ENCODE measurements at regions of chr4 and their contacts with region 1.

Region 1: GRCh38 chr4:127732613-127733328 is 2.6 kb downstream of the SLC25A31 start:
- DNase-seq: peak; percentile 72
- H3K4me3 ChIP-seq: no peak overlapping the region
- H3K27ac ChIP-seq: no peak overlapping the region
- H3K4me1 ChIP-seq: no peaks in the 10 kb centered on the region
- H3K27me3 ChIP-seq: no peaks in the 10 kb centered on the region
- CTCF ChIP-seq: peak; percentile 78
- EP300 ChIP-seq: no peak
- RAD21 ChIP-seq: peak; percentile 80

Region 2: GRCh38 chr4:127598656-127599055 is 134.1 kb before region 1 on chr4:
- CTCF ChIA-PET with region 1: interaction called, 104 read pairs
- POLR2A ChIA-PET with region 1: no interaction called
- DNase-seq: no peak
- H3K4me3 ChIP-seq: no peak overlapping the region
- H3K27ac ChIP-seq: no peak overlapping the region
- H3K4me1 ChIP-seq: no peaks in the 10 kb centered on the region; a peak in 1 of 4 replicates
- H3K27me3 ChIP-seq: no peaks in the 10 kb centered on the region; the same call in 1 of the 2 replicates
- CTCF ChIP-seq: no peak
- EP300 ChIP-seq: no peak
- RAD21 ChIP-seq: no peak

Region 3: DNA sequence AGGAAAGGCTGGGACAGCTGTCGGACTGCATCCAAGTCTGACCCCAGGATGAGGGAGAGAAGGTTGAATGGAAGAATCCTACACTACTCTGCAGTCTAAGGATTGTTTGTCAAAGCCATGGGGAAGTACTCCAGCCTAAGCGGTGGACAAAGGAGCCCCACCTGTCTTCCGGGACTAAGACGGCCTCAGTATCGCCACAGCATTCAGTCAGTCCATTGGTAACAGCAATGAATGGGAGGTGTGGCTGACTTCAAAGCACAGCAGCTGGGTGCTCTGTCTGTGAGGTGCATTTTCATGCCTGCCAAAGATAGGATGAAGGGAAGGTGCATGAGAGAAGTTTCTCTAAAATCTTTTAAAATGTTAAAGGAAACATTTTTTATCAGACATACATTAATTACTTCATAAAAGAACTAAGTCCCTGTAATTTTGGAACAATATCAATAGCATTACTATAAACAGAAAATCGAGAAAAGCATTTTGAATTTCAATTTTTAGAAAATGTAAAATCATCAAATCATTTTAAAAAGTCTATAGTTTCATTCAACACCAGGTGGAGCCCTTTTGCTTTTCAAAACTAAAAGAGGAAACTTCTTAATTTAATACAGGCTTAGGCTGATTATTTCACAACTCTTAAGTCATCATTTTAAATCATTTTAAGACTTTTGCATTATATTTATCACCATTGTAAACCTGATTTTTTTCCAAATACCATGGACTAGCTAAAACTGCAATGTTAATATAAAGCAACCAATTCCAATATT is 127.6 kb before region 1 on chr4:
- CTCF ChIA-PET with region 1: interaction called, 104 read pairs
- POLR2A ChIA-PET with region 1: no interaction called
- DNase-seq: peak; percentile 33
- H3K4me3 ChIP-seq: no peak overlapping the region; a peak in 1 of 4 replicates
- H3K27ac ChIP-seq: no peak overlapping the region
- H3K4me1 ChIP-seq: peaks cover 0 to 2% of the 10 kb centered on the region in 2 experiments; a peak in 1 of 4 replicates
- H3K27me3 ChIP-seq: no peaks in the 10 kb centered on the region; the same call in 1 of the 2 replicates
- CTCF ChIP-seq: peak; percentile 77
- EP300 ChIP-seq: no peak
- RAD21 ChIP-seq: peak; percentile 67

Region 4: GRCh38 chr4:127616898-127617297 is 115.9 kb before region 1 on chr4:
- CTCF ChIA-PET with region 1: interaction called, 27 read pairs
- POLR2A ChIA-PET with region 1: no interaction called
- DNase-seq: no peak
- H3K4me3 ChIP-seq: no peak overlapping the region
- H3K27ac ChIP-seq: no peak overlapping the region
- H3K4me1 ChIP-seq: no peaks in the 10 kb centered on the region
- H3K27me3 ChIP-seq: peaks cover 9% of the 10 kb centered on the region; the same call in 1 of the 2 replicates
- CTCF ChIP-seq: no peak
- EP300 ChIP-seq: no peak
- RAD21 ChIP-seq: no peak

Region 5: DNA sequence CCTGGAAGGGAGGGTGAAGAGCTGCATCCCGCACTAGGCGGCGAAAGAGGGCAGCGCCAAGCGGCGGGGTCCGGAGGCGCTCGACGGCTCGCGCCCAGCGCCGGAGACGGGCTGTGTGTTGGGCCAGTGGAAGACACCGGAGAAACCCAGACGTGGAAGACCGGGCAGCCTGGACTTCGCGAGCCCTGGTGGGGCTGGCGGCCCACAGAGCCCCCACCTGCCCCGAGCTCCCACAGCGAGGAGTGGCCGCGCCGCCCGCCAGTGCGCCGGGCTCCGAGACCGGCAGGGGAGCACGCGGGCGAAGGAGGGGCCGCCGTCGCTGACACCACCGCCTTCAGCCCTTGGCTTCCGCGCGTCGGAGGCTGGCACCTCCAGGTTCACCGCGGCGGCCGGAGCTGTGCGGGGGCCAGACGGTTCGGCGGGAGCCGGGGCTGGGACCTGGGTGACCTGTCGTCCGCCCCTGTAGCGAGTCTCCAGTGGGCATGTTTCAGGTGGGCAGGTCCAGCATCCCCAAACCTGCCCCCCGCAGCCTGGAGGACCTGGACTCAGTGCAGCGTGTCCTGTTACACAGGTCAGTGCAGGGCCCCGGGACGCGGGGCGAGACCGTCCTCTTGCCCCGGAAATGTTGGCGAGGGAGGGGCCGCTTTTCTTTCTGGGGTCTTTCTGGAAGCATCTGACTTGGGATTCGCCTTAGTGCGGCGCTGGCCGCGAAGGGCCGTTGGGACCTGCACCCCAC is 109.7 kb before region 1 on chr4:
- CTCF ChIA-PET with region 1: interaction called, 27 read pairs
- POLR2A ChIA-PET with region 1: no interaction called
- DNase-seq: peak; percentile 82
- H3K4me3 ChIP-seq: peak overlapping the region; percentile 45 to 54
- H3K27ac ChIP-seq: no peak overlapping the region
- H3K4me1 ChIP-seq: peaks cover 0 to 3% of the 10 kb centered on the region in 2 experiments; a peak in 1 of 4 replicates
- H3K27me3 ChIP-seq: peaks cover 9% of the 10 kb centered on the region
- CTCF ChIP-seq: peak; percentile 33
- EP300 ChIP-seq: no peak
- RAD21 ChIP-seq: no peak; the same call in 1 of the 2 replicates

Region 6: GRCh38 chr4:127708985-127709384 is 23.8 kb before region 1 on chr4:
- CTCF ChIA-PET with region 1: interaction called, 12 read pairs
- POLR2A ChIA-PET with region 1: no interaction called
- DNase-seq: no peak
- H3K4me3 ChIP-seq: no peak overlapping the region
- H3K27ac ChIP-seq: 0 out of 4 replicates have a peak overlapping the region, but pooled peaks of 1 of the 2 experiments have one; percentile 17
- H3K4me1 ChIP-seq: no peaks in the 10 kb centered on the region
- H3K27me3 ChIP-seq: no peaks in the 10 kb centered on the region
- CTCF ChIP-seq: no peak
- EP300 ChIP-seq: no peak
- RAD21 ChIP-seq: no peak

Measured in SK-N-SH (cell line).